ENCODE measurements at regions of chr12 and their contacts with region 1.

Region 1: DNA sequence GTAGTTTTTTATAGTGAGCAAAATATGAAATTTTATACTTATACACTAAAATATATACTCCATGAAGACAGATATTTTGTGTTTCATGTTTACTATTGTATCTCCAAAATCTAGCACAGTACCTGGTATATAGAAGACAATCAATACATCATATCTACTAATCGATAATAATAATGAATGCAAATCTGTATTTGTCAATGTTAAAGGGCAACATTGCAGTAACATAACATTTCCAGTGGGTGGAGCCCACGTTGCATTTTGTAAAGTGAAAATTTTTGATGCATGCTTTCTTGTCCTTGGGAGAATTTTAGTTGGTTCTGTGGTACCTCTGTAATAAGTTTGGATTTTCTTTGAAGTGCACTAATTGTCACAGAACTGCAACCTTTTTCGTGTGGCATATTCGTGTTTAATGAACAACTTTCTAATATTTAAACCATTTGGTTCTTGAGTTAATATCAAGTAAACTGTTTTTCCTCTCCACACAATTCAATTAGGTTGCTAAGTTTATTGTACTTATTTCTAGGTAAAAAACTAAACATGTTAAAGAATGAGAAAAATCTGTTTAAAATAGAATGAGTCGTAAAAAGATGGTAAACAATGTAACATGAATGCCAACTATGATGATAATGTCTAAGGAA is 47.4 kb downstream of the AVPR1A start:
- DNase-seq: no peak

Region 2: GRCh38 chr12:63276537-63277365 is 173.1 kb after region 1 on chr12:
- intact Hi-C with region 1: loop called (anchors 10 kb)
- DNase-seq: peak in 1 of 10 donors; percentile 14

Region 3: DNA sequence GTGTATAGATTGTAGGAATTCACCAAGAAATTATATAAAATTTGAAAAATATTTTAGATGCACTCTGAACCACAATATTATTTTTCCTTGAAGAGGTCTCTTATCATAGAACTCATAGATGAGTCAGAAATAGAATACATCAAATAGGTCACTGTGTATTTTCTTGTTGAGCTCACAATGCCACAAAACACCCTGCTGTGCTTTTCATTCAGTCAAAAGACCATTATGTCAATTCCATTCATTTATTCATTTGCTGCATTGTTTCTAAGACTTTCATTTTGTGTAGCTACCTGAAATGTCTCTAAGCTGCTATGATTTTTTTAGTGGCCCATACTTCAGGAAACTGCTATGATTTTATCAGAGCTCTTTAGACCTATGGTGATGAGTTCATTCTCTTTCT is 279.3 kb after region 1 on chr12:
- intact Hi-C with region 1: no loop called
- DNase-seq: no peak

Region 4: GRCh38 chr12:63802012-63802608 is 698.5 kb after region 1 on chr12:
- intact Hi-C with region 1: loop called (anchors 2 kb)
- DNase-seq: no peak

Region 5: GRCh38 chr12:64256166-64256800 is 1152.7 kb after region 1 on chr12:
- intact Hi-C with region 1: loop called (anchors 10 kb)
- DNase-seq: no peak